RWPE1 (cell line): ENCODE measurements at regions of chr1 and their contacts with region 1.

Region 1: DNA sequence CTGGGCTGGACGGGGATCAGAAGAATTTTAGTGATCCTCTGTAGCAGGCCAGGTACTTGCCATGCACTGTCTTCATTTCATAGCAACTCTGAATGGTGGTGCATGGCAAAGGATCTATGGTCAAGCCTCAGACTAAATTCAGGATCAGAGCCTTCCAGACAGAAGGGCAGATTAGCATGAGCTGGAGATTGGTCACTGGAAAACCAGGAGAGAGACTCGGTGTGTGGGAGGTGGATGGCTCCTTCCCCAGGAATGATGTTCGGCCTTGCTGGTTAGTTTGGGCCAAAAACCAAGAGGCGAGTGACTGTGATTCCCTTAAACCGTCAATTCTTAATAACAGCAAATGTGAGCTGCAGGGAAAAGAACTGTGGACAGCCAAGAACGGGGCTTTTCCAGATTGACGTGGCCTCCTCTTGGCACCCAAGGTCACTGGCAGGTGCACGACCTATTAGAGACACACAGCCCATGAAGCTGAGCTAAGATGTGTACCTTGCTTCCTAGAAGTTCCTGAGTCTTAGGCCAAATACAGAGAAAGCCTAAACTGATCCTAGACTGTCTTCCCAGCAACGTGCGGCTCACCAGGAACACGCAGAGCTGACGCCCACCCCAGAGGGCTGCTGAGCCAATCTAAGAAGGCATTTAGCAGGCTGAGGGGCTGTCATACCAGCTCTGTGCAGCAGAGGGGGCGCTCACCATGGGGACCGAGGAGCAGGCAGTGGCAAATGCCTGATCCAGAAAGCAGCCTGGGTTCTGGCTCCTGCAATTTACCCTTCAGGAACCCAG is 18.5 kb downstream of the ALDH4A1 start:
- DNase-seq: peak; percentile 70
- H3K27ac ChIP-seq: peak overlapping the region; percentile 91
- CTCF ChIP-seq: peak; percentile 88

Region 2: GRCh38 chr1:18866314-18866713 is 17.5 kb before region 1 on chr1:
- CTCF ChIA-PET with region 1: no interaction called
- POLR2A ChIA-PET with region 1: no interaction called
- DNase-seq: no peak
- H3K27ac ChIP-seq: no peak overlapping the region
- CTCF ChIP-seq: no peak

Region 3: GRCh38 chr1:19096036-19096833 is 212.4 kb after region 1 on chr1:
- CTCF ChIA-PET with region 1: interaction called, 15 read pairs
- POLR2A ChIA-PET with region 1: no interaction called
- DNase-seq: peak; percentile 44
- H3K27ac ChIP-seq: no peak overlapping the region
- CTCF ChIP-seq: peak; percentile 74